ENCODE measurements at regions of chr7 and their contacts with region 1.

Region 1: GRCh38 chr7:71408271-71408670 is 276.3 kb downstream of the GALNT17 start:
- DNase-seq: peak; percentile 79
- ATAC-seq: peak; percentile 95

Region 2: DNA sequence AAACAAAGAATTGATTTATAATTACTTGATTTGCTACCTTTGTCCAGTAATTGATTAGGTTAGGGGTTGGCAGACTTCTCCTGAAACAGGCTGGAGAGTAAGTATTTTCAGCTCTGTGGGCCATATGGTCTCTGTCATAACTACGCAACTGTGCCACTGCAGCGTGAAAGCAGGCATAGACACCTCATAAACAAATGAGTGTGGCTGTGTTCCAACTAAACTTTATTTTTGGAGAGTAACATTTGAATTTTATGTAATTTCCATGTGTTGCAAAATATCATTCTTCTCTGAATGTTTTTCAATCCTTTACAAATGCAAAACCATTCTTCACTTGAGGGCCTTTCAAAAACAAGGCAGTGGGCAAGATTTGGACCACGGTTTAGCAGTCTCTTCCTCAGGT is 199.4 kb before region 1 on chr7:
- intact Hi-C with region 1: no loop called
- DNase-seq: no peak
- ATAC-seq: no peak

Region 3: GRCh38 chr7:71237945-71238344 is 170.3 kb before region 1 on chr7:
- intact Hi-C with region 1: loop called (anchors 10 kb)
- DNase-seq: peak; percentile 46
- ATAC-seq: peak; percentile 88

Region 4: DNA sequence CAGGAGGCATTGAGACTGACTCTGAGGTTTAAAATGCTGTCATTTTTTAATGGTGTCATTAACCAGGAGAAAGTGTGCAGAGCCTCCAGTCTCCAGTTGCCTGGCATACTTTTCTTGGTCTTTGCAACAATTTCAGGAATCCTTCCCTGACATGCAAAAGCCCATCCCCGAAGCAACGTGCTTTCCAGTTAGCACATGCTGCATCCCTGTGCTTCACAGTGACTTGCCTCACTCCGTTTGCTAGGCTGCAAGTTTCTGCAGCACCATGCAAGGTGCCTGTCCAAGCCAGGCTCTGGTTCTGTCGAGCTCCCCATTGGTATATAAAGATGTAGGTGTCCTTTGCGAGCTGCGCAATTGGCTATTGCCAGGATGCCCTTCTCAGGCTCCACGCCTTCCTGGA is 141.4 kb before region 1 on chr7:
- intact Hi-C with region 1: loop called (anchors 10 kb)
- DNase-seq: no peak
- ATAC-seq: no peak